HEK293 (cell line): ENCODE measurements at regions of chr14 and their contacts with region 1.

Region 1: DNA sequence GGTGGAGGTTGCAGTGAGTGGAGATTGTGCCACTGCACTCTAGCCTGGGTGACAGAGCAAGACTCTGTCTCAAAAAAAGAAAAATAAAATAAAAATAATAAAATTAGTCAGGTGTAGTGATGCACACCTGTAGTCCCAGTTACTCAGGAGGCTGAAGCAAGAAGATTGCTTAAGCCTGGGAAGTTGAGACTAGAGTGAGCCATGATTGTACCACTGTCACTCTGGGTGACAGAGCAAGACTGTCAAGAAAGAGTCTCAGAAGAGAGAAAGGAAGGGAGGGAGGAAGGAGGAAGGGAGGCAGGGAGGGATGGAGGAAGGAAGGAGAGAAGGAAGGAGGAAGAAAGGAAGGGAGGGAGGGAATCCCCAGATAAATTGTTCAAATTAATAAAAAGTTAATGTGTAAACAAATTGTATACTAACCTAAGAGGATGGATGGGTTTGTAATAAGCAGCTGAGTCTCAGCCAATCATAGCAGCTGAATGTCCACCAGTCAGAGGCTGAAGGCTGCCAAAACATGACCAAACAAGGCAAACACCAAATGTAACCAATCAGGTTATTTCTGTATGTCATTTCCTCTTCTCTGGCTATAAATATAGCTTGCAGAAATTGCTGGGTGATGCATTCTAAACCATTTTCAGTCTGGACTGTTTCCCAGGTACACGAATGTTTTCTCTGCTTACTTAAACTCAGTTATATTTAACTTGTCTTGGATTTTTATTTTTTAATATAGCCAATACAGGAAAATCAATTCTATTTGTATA is 6.1 kb upstream of the CDCA4 start:
- H3K4me3 ChIP-seq: no peak overlapping the region
- H3K27ac ChIP-seq: no peak overlapping the region
- H3K4me1 ChIP-seq: no peaks in the 10 kb centered on the region
- CTCF ChIP-seq: no peak

Region 2: GRCh38 chr14:104976198-104977007 is 50.6 kb before region 1 on chr14:
- CTCF ChIA-PET with region 1: interaction called, 12 read pairs
- POLR2A ChIA-PET with region 1: no interaction called
- H3K4me3 ChIP-seq: no peak overlapping the region
- H3K27ac ChIP-seq: no peak overlapping the region
- H3K4me1 ChIP-seq: peaks cover 8% of the 10 kb centered on the region; the same call in 1 of the 2 replicates
- CTCF ChIP-seq: peak; percentile 88